Calu3 (cell line): ENCODE measurements at regions of chr11 and their contacts with region 1.

Region 1: DNA sequence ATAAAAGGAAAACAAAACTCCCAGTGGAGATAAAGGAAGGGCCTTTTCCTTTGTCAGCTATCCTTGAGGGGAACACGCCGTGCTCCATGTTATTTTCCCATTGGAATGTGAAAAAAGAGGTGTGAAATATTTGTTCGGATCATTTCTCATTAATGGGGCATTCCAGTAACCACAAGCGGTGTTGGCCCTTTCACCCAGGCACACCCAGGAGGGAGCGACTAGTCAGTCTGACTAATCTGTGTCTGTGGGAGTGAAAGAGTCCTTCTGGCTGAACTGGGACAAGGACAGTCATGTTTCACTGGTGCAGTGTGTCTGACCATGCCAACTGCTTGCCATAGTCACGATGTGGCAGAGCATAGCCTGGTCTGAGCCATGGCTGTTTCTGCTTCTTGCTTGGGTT is 13.0 kb upstream of the MYEOV start:
- DNase-seq: peak; percentile 79
- H3K4me3 Mint-ChIP-seq: no peak overlapping the region
- H3K27ac Mint-ChIP-seq: no peak overlapping the region
- H3K4me1 Mint-ChIP-seq: peaks cover 20% of the 10 kb centered on the region
- H3K27me3 Mint-ChIP-seq: no peaks in the 10 kb centered on the region
- CTCF ChIP-seq: no peak

Region 2: DNA sequence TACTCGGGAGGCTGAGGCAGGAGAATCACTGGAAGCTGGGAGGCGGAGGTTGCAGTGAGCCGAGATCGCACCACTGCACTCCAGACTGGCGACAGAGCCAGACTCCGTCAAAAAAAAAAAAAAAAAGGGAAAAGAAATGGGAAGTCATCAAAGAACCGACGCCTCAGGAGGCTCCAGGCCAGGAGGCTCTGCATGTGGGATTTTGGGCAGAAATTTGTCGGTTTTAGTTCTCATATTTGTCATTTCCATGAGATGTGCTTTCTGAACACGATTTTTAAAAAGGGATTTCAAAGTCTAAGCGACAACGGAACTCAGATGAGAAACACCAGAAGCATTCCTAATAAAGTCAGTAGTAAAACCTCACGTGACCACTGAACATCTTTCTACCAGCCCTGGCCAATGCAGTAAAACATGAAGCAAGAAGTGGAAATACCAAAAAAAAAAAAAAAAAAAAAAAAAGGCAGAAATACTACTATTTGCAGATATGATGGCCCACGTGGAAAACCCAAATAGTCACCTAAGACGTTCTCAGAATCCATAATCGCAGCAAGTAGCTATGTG is 394.9 kb after region 1 on chr11:
- CTCF ChIA-PET with region 1: interaction called, 10 read pairs
- intact Hi-C with region 1: no loop called
- DNase-seq: no peak
- H3K4me3 Mint-ChIP-seq: peak overlapping the region; percentile 86
- H3K27ac Mint-ChIP-seq: peak overlapping the region; percentile 88
- H3K4me1 Mint-ChIP-seq: peaks cover 22% of the 10 kb centered on the region
- H3K27me3 Mint-ChIP-seq: no peaks in the 10 kb centered on the region
- CTCF ChIP-seq: no peak